ENCODE measurements at regions of chr1 and their contacts with region 1.

Region 1: GRCh38 chr1:211578640-211579433 is at the start of gene SLC30A1:
- DNase-seq: peak; percentile 99
- H3K4me3 ChIP-seq: peak within 1 kb of the TSS; percentile 72 to 86
- H3K4me3 Mint-ChIP-seq: peak within 1 kb of the TSS; percentile 90 to 96 (median 92)
- H3K27ac ChIP-seq: peak within 1 kb of the TSS; percentile 76
- H3K27ac Mint-ChIP-seq: peak within 1 kb of the TSS; percentile 86 to 97 (median 93)
- H3K4me1 ChIP-seq: peaks cover 42% of the 10 kb centered on the region
- H3K4me1 Mint-ChIP-seq: peaks cover 23 to 56% (median 36%) of the 10 kb centered on the region in 4 donors
- H3K27me3 ChIP-seq: no peaks in the 10 kb centered on the region
- H3K27me3 Mint-ChIP-seq: peaks cover 0 to 2% of the 10 kb centered on the region in 2 donors
- total RNA-seq, gene SLC30A1: 10.1 to 10.6 TPM

Region 2: DNA sequence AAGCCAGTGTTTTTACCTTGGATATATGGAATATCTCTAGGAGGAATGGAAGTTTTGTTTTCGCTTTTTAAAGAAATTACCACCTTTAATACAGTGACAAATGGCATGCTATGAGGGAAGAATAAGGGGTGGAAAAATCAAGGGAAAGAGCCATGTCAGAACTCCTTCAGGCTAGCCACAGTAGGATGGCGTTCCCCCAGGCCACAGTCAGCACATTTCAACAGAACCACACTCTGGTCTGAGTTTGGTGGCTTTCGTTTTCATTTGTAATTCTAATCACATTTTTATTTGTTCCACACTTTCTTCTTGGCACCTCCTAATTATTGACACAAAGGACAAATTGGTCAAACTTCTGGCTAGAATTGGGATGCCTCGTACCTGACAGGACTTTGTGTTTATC is 380.0 kb before region 1 on chr1:
- CTCF ChIA-PET with region 1: no interaction called
- POLR2A ChIA-PET with region 1: no interaction called
- intact Hi-C with region 1: no loop called
- DNase-seq: no peak
- H3K4me3 ChIP-seq: no peak overlapping the region
- H3K4me3 Mint-ChIP-seq: no peak overlapping the region
- H3K27ac ChIP-seq: no peak overlapping the region
- H3K27ac Mint-ChIP-seq: no peak overlapping the region
- H3K4me1 ChIP-seq: no peaks in the 10 kb centered on the region
- H3K4me1 Mint-ChIP-seq: no peaks in the 10 kb centered on the region
- H3K27me3 ChIP-seq: no peaks in the 10 kb centered on the region
- H3K27me3 Mint-ChIP-seq: peaks cover 0 to 6% of the 10 kb centered on the region in 2 donors

Region 3: DNA sequence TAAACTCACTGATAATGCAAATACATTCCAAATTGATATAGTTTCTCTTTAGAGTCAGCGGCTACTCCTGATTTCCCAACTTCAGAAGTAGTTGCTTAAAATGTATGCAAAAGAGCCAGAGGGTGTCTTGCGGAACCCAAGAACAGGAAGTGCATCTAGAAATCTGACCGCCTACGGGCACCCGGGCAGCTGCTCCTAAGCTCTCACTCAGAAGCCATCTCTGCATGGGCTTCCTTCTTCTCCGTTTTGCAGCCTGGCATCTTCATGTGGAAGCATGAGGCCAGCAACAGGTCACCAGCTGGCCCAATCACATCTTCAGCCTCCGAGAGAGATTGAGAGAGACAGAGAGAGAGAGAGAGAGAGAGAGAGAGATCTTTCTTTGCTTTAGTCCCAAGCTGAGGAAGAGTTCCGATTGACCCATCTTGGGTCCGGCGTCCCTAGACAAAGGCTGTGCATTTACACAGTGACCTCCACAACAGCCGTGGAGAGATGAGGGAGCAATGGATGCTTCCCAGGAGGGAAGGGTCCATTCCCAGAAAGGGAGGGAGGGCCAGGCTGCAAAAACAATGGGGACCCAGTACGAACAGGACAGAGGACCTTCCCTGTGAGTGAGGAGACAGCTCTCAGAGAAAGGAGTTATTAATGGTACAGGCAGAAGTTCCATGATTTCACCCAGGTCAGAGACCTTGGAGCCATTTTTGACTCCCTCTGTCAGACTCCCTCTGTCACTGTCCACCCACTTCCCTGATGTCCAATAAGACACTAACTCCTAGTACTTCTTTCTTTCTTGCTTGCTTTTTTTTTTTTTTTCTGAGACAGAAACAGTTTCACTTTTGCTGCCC is 28.3 kb after region 1 on chr1:
- CTCF ChIA-PET with region 1: interaction called, 4 read pairs
- POLR2A ChIA-PET with region 1: interaction called, 21 read pairs
- intact Hi-C with region 1: loop called (anchors 2 kb)
- DNase-seq: peak in 4 of 5 donors; percentile 20 to 22 (median 20)
- H3K4me3 ChIP-seq: peak overlapping the region; percentile 20 to 39
- H3K4me3 Mint-ChIP-seq: peak overlapping the region; percentile 74 to 89 (median 84)
- H3K27ac ChIP-seq: peak overlapping the region; percentile 22
- H3K27ac Mint-ChIP-seq: peak overlapping the region; percentile 18 to 94 (median 90)
- H3K4me1 ChIP-seq: peaks cover 18% of the 10 kb centered on the region
- H3K4me1 Mint-ChIP-seq: peaks cover 8 to 28% (median 11%) of the 10 kb centered on the region in 4 donors
- H3K27me3 ChIP-seq: no peaks in the 10 kb centered on the region
- H3K27me3 Mint-ChIP-seq: peaks cover 1 to 2% of the 10 kb centered on the region in 2 donors

Region 4: GRCh38 chr1:211625040-211625439 is 46.2 kb after region 1 on chr1:
- CTCF ChIA-PET with region 1: interaction called, 8 read pairs
- POLR2A ChIA-PET with region 1: interaction called, 4 read pairs
- intact Hi-C with region 1: loop called (anchors 1 kb)
- DNase-seq: peak in 4 of 5 donors; percentile 13 to 30 (median 19)
- H3K4me3 ChIP-seq: no peak overlapping the region
- H3K4me3 Mint-ChIP-seq: no peak overlapping the region
- H3K27ac ChIP-seq: no peak overlapping the region
- H3K27ac Mint-ChIP-seq: no peak overlapping the region
- H3K4me1 ChIP-seq: peaks cover 11% of the 10 kb centered on the region
- H3K4me1 Mint-ChIP-seq: peaks cover 9 to 18% (median 15%) of the 10 kb centered on the region in 4 donors
- H3K27me3 ChIP-seq: no peaks in the 10 kb centered on the region
- H3K27me3 Mint-ChIP-seq: peaks cover 0 to 2% of the 10 kb centered on the region in 2 donors

Region 5: DNA sequence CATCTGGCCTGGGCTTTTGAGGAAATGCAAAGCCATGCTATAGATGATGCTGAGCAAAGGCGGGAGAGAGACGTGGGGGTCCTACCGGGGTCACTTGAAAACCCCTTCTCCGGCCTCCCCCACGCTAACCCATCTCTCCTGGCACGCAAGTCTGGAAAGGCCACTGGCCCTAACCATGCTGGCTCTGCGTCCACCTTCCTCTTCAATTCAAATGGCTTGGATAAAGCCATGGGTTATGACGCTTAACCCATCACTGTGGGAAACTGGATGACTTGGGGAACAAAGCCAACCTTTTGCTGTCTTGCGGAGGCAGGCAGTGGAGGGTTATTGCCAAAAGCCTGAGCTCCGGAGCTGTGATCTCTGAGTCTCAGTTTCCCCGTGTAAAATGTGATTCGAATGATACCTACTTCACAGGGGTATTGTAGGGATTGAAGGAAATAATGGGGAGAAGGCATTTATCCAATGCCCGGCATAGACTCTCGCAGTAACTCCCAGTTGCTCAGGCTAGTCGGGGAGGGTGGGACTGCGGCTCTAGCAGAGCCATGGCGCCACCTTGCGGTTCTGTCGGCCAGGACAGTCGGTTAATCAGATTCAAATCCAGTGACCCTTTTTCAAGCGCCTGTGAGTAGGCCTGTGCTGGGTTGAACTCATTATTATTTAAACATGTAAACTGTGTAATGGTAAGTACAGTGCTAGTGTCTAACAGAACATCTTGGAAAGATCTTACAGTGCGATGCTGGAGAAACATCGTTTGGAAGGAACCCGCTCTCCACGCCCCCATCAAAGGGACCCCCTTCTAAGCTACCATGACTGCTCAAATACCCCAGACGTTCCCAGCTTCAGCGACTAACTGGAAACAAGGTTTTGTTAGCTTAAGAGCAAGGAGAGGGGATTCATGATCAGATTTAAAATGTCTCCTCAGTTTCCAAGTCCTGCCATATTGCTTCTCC is 76.3 kb after region 1 on chr1:
- CTCF ChIA-PET with region 1: interaction called, 18 read pairs
- POLR2A ChIA-PET with region 1: interaction called, 4 read pairs
- intact Hi-C with region 1: loop called (anchors 1 kb)
- DNase-seq: peak; percentile 71 to 75 (median 74)
- H3K4me3 ChIP-seq: no peak overlapping the region
- H3K4me3 Mint-ChIP-seq: no peak overlapping the region
- H3K27ac ChIP-seq: no peak overlapping the region
- H3K27ac Mint-ChIP-seq: no peak overlapping the region
- H3K4me1 ChIP-seq: no peaks in the 10 kb centered on the region
- H3K4me1 Mint-ChIP-seq: peaks cover 0 to 2% (median 0%) of the 10 kb centered on the region in 4 donors
- H3K27me3 ChIP-seq: no peaks in the 10 kb centered on the region
- H3K27me3 Mint-ChIP-seq: peaks cover 0 to 2% of the 10 kb centered on the region in 2 donors

Region 6: DNA sequence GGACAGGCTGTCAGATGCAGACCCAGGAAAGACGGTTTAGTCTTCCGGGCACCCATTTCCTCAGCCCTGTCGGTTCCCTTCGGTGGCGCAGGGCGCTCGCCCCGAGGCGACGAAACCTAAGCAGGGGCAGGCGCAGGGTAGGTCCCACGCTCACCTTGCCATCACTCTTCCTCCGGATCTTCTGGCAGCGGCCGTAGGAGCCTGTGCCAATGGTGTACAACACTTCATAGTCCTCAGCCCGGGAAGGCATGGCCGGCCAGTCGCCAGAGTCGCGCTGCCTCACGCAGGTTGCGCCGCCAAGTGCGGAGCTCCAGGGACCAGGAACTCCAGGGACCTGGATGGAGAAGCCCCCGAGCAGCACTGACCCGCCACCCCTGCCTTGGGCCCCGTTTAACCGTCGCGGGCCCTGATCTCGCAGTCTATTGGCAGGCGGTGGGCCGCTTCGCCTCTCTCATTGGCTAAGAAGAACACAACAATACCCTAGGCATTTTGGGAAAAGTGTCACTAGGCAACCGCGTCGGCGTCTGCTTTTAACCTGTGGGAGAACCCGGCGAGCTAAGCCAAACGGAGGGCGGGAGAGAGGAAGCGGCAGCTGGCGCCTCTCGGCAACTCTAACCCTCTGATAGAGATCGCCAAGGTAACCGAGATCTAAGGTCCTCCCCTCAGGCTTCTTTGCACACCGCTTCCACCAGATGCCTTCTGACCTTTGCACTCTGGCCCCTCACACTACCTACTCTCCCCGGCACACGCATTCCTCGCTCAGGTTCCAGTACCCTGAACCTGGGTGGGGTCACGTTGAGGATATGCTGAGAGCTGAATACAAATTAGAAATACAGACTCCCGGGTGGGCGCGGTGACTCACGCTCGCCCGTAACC is 96.6 kb after region 1 on chr1 and contains the start of gene NEK2:
- CTCF ChIA-PET with region 1: interaction called, 3 read pairs
- POLR2A ChIA-PET with region 1: interaction called, 4 read pairs
- intact Hi-C with region 1: loop called (anchors 1 kb)
- DNase-seq: peak; percentile 83 to 93 (median 86)
- H3K4me3 ChIP-seq: peak within 1 kb of the TSS; percentile 44 to 83
- H3K4me3 Mint-ChIP-seq: peak within 1 kb of the TSS; percentile 89 to 94 (median 92)
- H3K27ac ChIP-seq: peak within 1 kb of the TSS; percentile 49
- H3K27ac Mint-ChIP-seq: peak within 1 kb of the TSS; percentile 81 to 92 (median 86)
- H3K4me1 ChIP-seq: peaks cover 12% of the 10 kb centered on the region
- H3K4me1 Mint-ChIP-seq: peaks cover 6 to 22% (median 12%) of the 10 kb centered on the region in 4 donors
- H3K27me3 ChIP-seq: no peaks in the 10 kb centered on the region
- H3K27me3 Mint-ChIP-seq: no peaks in the 10 kb centered on the region
- total RNA-seq, gene NEK2: not detected

Region 7: GRCh38 chr1:212857992-212858460 is 1279.2 kb after region 1 on chr1 and contains the start of gene FLVCR1:
- CTCF ChIA-PET with region 1: no interaction called
- POLR2A ChIA-PET with region 1: no interaction called
- intact Hi-C with region 1: loop called (anchors 5 kb)
- DNase-seq: peak; percentile 89 to 94 (median 90)
- H3K4me3 ChIP-seq: peak within 1 kb of the TSS; percentile 58 to 75
- H3K4me3 Mint-ChIP-seq: peak within 1 kb of the TSS in 7 of 8 donors; percentile 58 to 98 (median 95)
- H3K27ac ChIP-seq: peak within 1 kb of the TSS; percentile 71
- H3K27ac Mint-ChIP-seq: peak within 1 kb of the TSS; percentile 91 to 97 (median 93)
- H3K4me1 ChIP-seq: peaks cover 44% of the 10 kb centered on the region
- H3K4me1 Mint-ChIP-seq: peaks cover 11 to 20% (median 18%) of the 10 kb centered on the region in 4 donors
- H3K27me3 ChIP-seq: no peaks in the 10 kb centered on the region
- H3K27me3 Mint-ChIP-seq: no peaks in the 10 kb centered on the region
- total RNA-seq, gene FLVCR1: 10.8 to 12.7 TPM

Measured in CD4-positive, alpha-beta memory T cell (primary cell).